ENCODE measurements at regions of chr10 and their contacts with region 1.

Region 1: GRCh38 chr10:72297968-72298773 is 24.4 kb downstream of the DDIT4 start:
- DNase-seq: peak; percentile 97 to 100
- H3K4me3 ChIP-seq: peak overlapping the region; percentile 65 to 77
- H3K27ac ChIP-seq: peak overlapping the region; percentile 89 to 92
- H3K4me1 ChIP-seq: peaks cover 0 to 12% of the 10 kb centered on the region in 2 donors
- H3K27me3 ChIP-seq: no peaks in the 10 kb centered on the region
- CTCF ChIP-seq: no peak

Region 2: GRCh38 chr10:72248468-72249151 is 49.6 kb before region 1 on chr10:
- intact Hi-C with region 1: loop called (anchors 2 kb)
- DNase-seq: peak; percentile 83 to 96
- H3K4me3 ChIP-seq: peak overlapping the region in 1 of 2 donors; percentile 44
- H3K27ac ChIP-seq: peak overlapping the region; percentile 91 to 97
- H3K4me1 ChIP-seq: peaks cover 49 to 85% of the 10 kb centered on the region in 2 donors
- H3K27me3 ChIP-seq: no peaks in the 10 kb centered on the region
- CTCF ChIP-seq: no peak

Region 3: DNA sequence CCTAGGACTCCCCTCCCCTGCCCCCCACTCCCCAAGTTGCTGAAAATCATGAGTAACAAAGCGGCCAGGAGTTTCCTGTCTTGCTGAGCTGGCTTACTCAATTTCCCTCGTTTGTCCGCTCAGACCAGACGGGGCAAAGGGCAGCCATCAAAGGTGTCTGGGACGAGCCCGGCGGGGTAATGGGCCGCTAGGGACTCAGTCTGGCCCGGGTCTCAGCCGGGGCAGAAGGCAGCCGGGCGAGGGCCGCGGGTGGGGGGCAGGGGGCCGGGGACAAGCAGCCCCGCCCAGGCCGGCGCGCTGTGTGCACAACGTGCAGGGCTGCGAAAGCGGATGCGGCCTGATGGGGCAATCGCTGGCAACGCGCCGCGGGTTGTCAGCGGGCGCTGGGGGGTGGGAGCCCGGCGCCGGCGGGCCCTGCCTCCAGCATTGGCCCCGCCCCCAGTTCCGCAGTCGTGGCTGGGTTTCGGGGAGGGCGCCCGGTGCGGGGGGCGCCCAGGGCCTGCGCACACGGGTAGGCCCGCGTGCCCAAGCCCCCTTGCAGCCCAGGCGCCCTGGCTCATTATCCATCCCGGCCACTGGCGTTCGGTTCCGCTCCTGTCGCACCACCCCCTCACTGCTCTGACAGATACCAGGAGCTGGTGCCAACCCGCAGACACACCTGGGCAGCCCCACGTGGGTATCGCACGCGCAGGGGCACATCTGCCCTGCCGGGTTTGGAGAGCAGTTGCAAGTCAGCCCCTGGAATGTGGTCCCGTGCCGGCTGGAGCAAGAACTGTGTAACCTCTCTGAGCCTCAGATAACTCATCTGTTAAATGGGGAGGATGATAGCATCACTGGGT is 21.5 kb after region 1 on chr10:
- intact Hi-C with region 1: loop called (anchors 1 kb)
- DNase-seq: peak; percentile 63 to 95
- H3K4me3 ChIP-seq: peak overlapping the region; percentile 63 to 66
- H3K27ac ChIP-seq: peak overlapping the region; percentile 83 to 90
- H3K4me1 ChIP-seq: peaks cover 21 to 45% of the 10 kb centered on the region in 2 donors
- H3K27me3 ChIP-seq: no peaks in the 10 kb centered on the region
- CTCF ChIP-seq: no peak

Region 4: GRCh38 chr10:72525277-72525676 is 227.1 kb after region 1 on chr10:
- intact Hi-C with region 1: no loop called
- DNase-seq: no peak
- H3K4me3 ChIP-seq: no peak overlapping the region
- H3K27ac ChIP-seq: no peak overlapping the region
- H3K4me1 ChIP-seq: no peaks in the 10 kb centered on the region
- H3K27me3 ChIP-seq: no peaks in the 10 kb centered on the region
- CTCF ChIP-seq: no peak